ENCODE measurements at regions of chr19 and their contacts with region 1.

Region 1: GRCh38 chr19:58558623-58559274 is 338 bp upstream of the UBE2M start:
- DNase-seq: peak; percentile 99
- ATAC-seq: peak; percentile 81 to 84
- H3K4me3 ChIP-seq: peak overlapping the region; percentile 72 to 80 (median 78)
- H3K27ac ChIP-seq: peak overlapping the region; percentile 97 to 99 (median 97)
- H3K4me1 ChIP-seq: peaks cover 55 to 73% of the 10 kb centered on the region in 2 donors
- H3K27me3 ChIP-seq: no peaks in the 10 kb centered on the region
- CTCF ChIP-seq: no peak
- POLR2A ChIP-seq: peak; percentile 60 to 69

Region 2: DNA sequence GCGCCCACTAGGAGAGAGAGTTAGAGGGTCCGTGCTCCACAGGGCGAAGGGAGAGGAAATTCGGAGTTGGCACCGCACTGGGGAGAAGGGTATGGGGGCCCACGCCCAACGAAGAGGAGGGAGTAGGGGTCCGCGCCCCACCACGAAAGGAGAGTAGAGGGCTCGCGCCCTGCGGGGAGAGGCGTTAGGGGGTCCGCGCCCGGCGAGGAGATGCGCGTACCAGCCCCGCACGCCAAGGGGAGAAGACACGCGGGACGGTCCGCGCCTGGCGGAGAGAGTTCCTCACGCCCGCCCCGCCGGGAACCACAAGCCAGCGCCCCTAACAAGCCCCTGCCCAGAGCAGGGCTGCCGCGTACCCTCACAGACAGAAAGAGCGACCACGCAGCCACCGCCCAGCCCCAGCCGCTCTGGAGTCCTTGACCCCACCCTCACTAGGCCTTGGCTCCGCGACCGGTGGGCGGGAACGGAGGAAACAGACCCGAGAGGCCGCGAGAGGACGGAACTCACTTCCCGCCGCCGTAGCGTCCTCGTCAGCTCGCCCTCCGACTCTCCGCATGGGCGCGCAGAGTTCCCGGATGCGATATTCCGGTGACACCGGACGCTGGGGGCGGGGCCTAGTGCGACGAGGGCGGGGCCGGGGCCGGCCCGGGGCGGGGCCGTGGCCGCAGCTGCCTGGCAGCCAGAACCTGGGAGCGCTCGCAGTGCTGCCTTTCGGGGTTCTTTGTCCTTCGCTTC is 440.7 kb before region 1 on chr19:
- in situ Hi-C with region 1: no loop called
- intact Hi-C with region 1: no loop called
- DNase-seq: no peak
- ATAC-seq: no peak
- H3K4me3 ChIP-seq: no peak overlapping the region
- H3K27ac ChIP-seq: no peak overlapping the region
- H3K4me1 ChIP-seq: no peaks in the 10 kb centered on the region
- H3K27me3 ChIP-seq: peaks cover 0 to 16% (median 12%) of the 10 kb centered on the region in 3 donors
- CTCF ChIP-seq: no peak
- POLR2A ChIP-seq: no peak

Region 3: GRCh38 chr19:58475714-58476497 is 82.8 kb before region 1 on chr19 and contains the start of gene ZNF446:
- in situ Hi-C with region 1: no loop called
- intact Hi-C with region 1: no loop called
- DNase-seq: peak; percentile 94 to 95
- ATAC-seq: peak; percentile 97 to 98
- H3K4me3 ChIP-seq: peak within 1 kb of the TSS; percentile 76 to 83 (median 78)
- H3K27ac ChIP-seq: peak within 1 kb of the TSS; percentile 82 to 95 (median 86)
- H3K4me1 ChIP-seq: peaks cover 15 to 22% of the 10 kb centered on the region in 2 donors
- H3K27me3 ChIP-seq: no peaks in the 10 kb centered on the region
- CTCF ChIP-seq: no peak
- POLR2A ChIP-seq: peak; percentile 60 to 65
- total RNA-seq, gene ZNF446: 7.5 to 13.1 (median 8.9) TPM

Region 4: GRCh38 chr19:58572818-58573657 is 14.3 kb after region 1 on chr19 and contains the start of gene MZF1:
- in situ Hi-C with region 1: no loop called
- intact Hi-C with region 1: loop called (anchors 1 kb)
- DNase-seq: peak; percentile 100
- ATAC-seq: peak; percentile 82 to 84
- H3K4me3 ChIP-seq: peak within 1 kb of the TSS; percentile 70 to 85 (median 76)
- H3K27ac ChIP-seq: peak within 1 kb of the TSS; percentile 95 to 99 (median 98)
- H3K4me1 ChIP-seq: peaks cover 18 to 24% of the 10 kb centered on the region in 2 donors
- H3K27me3 ChIP-seq: no peaks in the 10 kb centered on the region
- CTCF ChIP-seq: peak in 4 of 5 experiments; percentile 8 to 41 (median 26)
- POLR2A ChIP-seq: peak; percentile 37 to 40
- total RNA-seq, gene MZF1: 6.8 to 21.5 (median 15.1) TPM